Activated CD8-positive, alpha-beta memory T cell treated with anti-CD3 and anti-CD28 coated beads, Interleukin-2, amount 10 ng/mL, durations not matched to agents 7 days and 5 days (primary cell): ENCODE measurements at regions of chr10 and their contacts with region 1.

Region 1: GRCh38 chr10:87861953-87862678 is 1.2 kb downstream of the KLLN start:
- DNase-seq: peak; percentile 97
- ATAC-seq: peak; percentile 73
- H3K4me3 Mint-ChIP-seq: peak overlapping the region; percentile 92
- H3K27ac Mint-ChIP-seq: peak overlapping the region; percentile 93
- H3K4me1 Mint-ChIP-seq: peaks cover 24% of the 10 kb centered on the region
- H3K27me3 Mint-ChIP-seq: no peaks in the 10 kb centered on the region

Region 2: GRCh38 chr10:87817609-87818504 is 44.3 kb before region 1 on chr10 and contains the start of gene ATAD1:
- CTCF ChIA-PET with region 1: interaction called, 12 read pairs
- DNase-seq: peak; percentile 92
- ATAC-seq: peak; percentile 93
- H3K4me3 Mint-ChIP-seq: peak within 1 kb of the TSS; percentile 81
- H3K27ac Mint-ChIP-seq: peak within 1 kb of the TSS; percentile 89
- H3K4me1 Mint-ChIP-seq: peaks cover 30% of the 10 kb centered on the region
- H3K27me3 Mint-ChIP-seq: no peaks in the 10 kb centered on the region
- total RNA-seq, gene ATAD1: 44.4 to 50.4 TPM

Region 3: DNA sequence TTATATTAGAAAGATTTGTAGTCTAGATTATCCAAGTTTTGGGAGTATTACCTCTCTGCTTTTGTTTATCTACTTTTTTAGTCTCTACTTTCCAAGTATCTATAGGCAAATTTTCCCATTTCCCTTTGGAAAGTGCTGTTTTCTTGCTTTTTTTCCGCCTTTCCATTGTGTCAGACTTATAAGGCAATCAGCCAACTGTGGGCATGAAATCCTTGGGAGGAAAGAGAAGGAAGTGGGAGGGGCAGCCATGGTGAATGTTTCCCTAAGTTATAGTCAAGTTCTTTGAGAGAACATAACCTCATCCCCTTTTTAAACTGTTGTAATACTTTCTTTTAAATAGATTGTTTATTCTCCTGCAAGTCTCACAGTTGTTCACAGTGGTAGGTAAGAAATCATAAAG is 53.9 kb after region 1 on chr10:
- CTCF ChIA-PET with region 1: no interaction called
- DNase-seq: no peak
- ATAC-seq: no peak
- H3K4me3 Mint-ChIP-seq: no peak overlapping the region
- H3K27ac Mint-ChIP-seq: no peak overlapping the region
- H3K4me1 Mint-ChIP-seq: peaks cover 20% of the 10 kb centered on the region
- H3K27me3 Mint-ChIP-seq: no peaks in the 10 kb centered on the region

Region 4: GRCh38 chr10:88091490-88092105 is 229.5 kb after region 1 on chr10:
- CTCF ChIA-PET with region 1: interaction called, 10 read pairs
- DNase-seq: peak; percentile 91
- ATAC-seq: peak; percentile 93
- H3K4me3 Mint-ChIP-seq: no peak overlapping the region
- H3K27ac Mint-ChIP-seq: peak overlapping the region; percentile 81
- H3K4me1 Mint-ChIP-seq: peaks cover 36% of the 10 kb centered on the region
- H3K27me3 Mint-ChIP-seq: peaks cover 34% of the 10 kb centered on the region